AG04450 (cell line): ENCODE measurements at regions of chr2 and their contacts with region 1.

Region 1: DNA sequence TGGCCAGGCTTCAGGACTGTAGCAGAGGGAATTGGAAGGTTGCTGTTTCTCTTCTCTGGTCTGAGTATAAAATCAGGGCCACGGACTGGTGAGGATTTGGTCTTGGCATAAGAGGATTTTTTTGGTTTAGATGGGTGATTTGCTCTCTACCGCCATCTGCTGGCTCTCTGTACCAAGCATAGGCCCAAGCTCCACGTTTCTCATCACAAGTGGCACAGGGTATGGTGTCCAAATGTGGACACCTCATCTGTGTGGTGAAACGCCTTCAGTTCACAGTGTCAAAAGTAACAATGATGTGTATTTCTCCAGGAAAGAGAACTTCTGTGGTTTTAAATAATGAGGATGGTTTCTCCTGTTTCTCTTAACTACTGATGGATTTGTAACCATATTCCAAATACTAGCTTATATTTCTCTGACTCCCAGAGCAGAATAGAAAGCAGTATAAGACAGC is 115.1 kb downstream of the EML6 start:
- DNase-seq: peak; percentile 21
- H3K4me3 ChIP-seq: no peak overlapping the region
- H3K27ac ChIP-seq: no peak overlapping the region
- H3K27me3 ChIP-seq: peaks cover 4% of the 10 kb centered on the region
- CTCF ChIP-seq: peak; percentile 91

Region 2: DNA sequence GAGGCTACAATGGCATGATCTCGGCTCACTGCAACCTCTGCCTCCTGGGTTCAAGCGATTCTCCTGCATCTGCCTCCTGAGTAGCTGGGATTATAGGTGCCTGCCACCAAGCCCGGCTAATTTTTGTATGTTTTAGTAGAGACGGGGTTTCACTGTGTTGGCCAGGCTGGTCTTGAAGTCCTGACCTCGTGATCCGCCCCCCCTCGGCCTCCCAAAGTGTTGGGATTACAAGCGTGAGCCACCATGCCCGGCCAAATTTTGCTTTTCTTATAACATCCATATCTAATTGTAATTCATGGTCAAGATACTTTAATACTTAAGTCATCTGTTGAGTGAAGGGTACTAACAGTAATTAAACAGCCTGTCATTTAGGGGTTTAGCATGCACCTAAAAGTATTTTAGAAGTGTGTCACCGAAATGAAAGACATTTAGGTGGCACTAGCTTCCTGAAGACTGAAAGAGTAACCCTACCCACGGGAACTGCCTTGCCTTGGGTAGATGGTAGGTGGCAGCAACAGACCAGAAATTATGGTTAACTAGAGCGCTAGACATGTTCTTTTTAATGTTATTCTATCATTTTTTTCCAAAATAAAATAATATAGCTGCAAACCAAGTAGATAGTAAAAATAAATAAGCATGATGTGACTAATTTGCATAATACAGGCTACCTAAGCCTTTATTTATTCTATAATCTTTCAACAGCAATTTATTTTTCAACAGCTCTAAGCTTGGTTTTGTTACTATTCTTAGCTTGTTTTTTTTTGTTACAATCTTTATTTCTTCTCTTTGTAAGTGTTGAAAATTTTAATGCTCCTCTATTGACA is 731.8 kb before region 1 on chr2:
- CTCF ChIA-PET with region 1: interaction called, 32 read pairs
- POLR2A ChIA-PET with region 1: no interaction called
- DNase-seq: no peak
- H3K4me3 ChIP-seq: no peak overlapping the region
- H3K27ac ChIP-seq: no peak overlapping the region
- H3K27me3 ChIP-seq: no peaks in the 10 kb centered on the region
- CTCF ChIP-seq: peak; percentile 81

Region 3: GRCh38 chr2:54638103-54638502 is 200.5 kb before region 1 on chr2:
- CTCF ChIA-PET with region 1: no interaction called
- POLR2A ChIA-PET with region 1: no interaction called
- DNase-seq: no peak
- H3K4me3 ChIP-seq: no peak overlapping the region
- H3K27ac ChIP-seq: no peak overlapping the region
- H3K27me3 ChIP-seq: no peaks in the 10 kb centered on the region
- CTCF ChIP-seq: no peak

Region 4: DNA sequence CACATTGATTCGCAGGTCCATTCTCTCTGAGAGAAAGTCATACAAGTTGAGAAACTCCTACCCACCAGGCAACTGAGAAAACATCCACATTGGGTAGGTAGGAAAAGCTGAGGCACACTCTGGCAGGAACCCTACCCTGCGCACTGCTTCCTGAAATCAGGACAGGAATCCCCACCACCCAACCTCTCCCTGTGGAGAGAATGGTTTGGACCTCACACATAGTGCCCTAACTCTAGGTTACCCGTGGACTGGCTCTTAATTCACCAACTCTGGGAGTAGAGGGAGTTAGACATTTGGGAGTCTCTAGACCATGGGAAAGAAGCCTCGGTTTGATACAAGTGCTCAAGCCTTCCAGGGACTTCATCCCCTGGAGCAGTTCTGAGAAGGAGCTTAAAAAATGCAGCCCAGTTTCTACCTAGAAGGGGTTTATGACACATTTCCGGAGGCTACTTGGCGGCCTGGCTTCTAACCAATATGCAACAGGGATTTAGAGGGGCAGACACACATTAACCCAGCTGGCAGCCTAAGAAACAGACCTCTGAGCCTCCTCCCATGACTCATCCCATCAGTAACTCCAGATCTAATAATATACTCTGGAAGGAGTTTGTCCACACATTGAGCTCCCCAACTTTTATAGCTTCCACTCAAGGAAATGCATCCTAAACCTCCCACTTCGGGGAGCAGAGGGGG is 21.5 kb after region 1 on chr2:
- CTCF ChIA-PET with region 1: interaction called, 15 read pairs
- POLR2A ChIA-PET with region 1: no interaction called
- DNase-seq: peak; percentile 53
- H3K4me3 ChIP-seq: no peak overlapping the region
- H3K27ac ChIP-seq: no peak overlapping the region
- H3K27me3 ChIP-seq: no peaks in the 10 kb centered on the region
- CTCF ChIP-seq: no peak

Region 5: GRCh38 chr2:55311444-55311870 is 472.8 kb after region 1 on chr2:
- CTCF ChIA-PET with region 1: no interaction called
- POLR2A ChIA-PET with region 1: no interaction called
- DNase-seq: no peak
- H3K4me3 ChIP-seq: no peak overlapping the region
- H3K27ac ChIP-seq: no peak overlapping the region
- H3K27me3 ChIP-seq: no peaks in the 10 kb centered on the region
- CTCF ChIP-seq: peak; percentile 50

Region 6: GRCh38 chr2:55365303-55365702 is 526.7 kb after region 1 on chr2:
- CTCF ChIA-PET with region 1: no interaction called
- POLR2A ChIA-PET with region 1: no interaction called
- DNase-seq: no peak
- H3K4me3 ChIP-seq: no peak overlapping the region
- H3K27ac ChIP-seq: no peak overlapping the region
- H3K27me3 ChIP-seq: no peaks in the 10 kb centered on the region
- CTCF ChIP-seq: no peak